Activated naive CD8-positive, alpha-beta T cell treated with anti-CD3 and anti-CD28 coated beads, Interleukin-2, amount 10 ng/mL, durations not matched to agents 7 days and 5 days (primary cell): ENCODE measurements at regions of chr5 and their contacts with region 1.

Region 1: DNA sequence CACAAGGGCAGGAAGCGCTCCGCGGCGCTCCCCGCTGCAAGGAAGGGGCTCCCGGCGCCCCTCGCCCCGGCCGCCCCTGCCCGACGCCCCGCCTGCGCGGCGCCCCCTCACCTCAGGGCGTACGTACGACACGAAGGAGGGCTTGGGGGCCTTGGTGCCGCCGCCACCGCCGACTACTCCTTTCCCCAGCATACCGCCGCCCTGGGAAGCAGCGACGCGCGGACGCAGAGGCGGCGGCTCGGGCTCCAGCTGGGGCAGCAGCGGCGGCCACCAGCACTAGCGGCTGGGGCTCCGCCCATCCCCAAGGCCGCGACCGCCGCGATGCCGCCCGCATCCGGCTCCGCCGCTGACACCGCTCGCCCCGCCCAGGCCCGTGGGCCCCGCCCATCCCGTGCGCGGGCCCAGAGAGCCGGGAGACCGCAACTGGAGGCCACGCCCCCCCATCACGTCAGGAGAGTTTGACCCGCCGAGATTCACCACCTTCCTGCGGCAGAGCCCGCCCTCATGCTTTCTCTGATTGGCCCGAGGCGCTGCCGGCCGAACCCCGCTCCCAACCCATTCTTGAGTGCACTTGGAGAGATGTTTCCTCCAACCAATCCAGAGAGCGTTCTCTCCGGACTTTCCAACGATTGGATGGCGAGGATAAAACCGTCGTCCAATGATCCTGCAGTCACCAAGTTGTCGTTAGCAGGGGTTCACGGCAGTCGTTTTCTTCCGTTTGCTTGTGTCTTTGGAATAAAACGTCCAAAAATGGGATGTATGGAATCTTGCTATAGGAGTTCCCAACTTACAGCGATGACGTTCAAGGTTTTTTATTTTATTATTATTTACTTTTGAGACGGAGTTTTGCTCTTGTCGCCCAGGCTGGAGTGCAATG is at the start of gene MTMR12:
- DNase-seq: peak; percentile 100
- ATAC-seq: peak; percentile 97
- H3K4me3 Mint-ChIP-seq: peak within 1 kb of the TSS; percentile 92
- H3K27ac Mint-ChIP-seq: peak within 1 kb of the TSS; percentile 96
- H3K4me1 Mint-ChIP-seq: peaks cover 29% of the 10 kb centered on the region
- H3K27me3 Mint-ChIP-seq: no peaks in the 10 kb centered on the region
- total RNA-seq, gene MTMR12: 30.6 to 32.2 TPM

Region 2: DNA sequence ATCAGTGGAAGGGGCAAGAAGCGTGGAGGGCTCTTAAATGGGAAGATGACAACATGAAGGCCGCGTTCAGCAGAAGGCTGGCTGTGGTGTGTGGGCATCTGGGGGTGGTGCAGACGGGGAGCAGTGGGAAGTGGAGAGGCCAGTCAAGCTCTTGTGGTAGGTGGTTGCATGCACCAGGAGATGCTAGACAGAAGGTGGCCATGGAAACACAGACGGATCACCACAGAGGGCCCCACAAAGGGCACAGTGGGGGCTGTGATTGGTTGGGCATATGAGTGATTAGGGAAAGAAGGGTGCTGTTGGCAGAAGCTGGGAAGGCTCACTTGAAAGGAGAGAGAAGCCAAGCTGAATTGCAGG is 14.8 kb before region 1 on chr5:
- POLR2A ChIA-PET with region 1: interaction called, 14 read pairs
- DNase-seq: no peak
- ATAC-seq: peak; percentile 68
- H3K4me3 Mint-ChIP-seq: no peak overlapping the region
- H3K27ac Mint-ChIP-seq: no peak overlapping the region
- H3K4me1 Mint-ChIP-seq: peaks cover 19% of the 10 kb centered on the region
- H3K27me3 Mint-ChIP-seq: no peaks in the 10 kb centered on the region

Region 3: DNA sequence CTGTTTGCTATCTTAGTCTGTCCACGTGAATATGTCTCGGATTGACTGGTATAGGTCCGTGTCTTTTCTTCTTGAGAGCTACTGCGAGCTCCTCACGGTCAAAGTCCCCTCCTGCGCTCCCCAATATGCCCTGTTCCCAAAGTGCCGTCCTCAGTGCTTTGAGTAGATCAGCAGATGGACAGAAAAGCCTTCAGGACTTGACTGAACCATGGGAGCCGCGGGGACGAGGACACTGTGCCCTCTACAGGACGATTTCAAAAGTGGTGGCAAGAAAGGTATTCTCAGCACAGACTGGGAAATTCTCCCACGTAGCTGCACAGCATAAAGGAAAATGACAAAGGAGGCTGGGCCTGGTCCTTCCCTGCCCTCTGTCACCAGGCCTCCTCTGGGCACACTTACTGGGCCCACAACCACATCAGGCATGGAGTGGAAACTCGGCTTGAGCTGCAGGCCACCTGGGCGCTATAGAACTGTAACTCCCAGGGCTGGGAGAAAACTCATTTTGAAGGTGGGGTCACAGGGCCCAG is 16.5 kb after region 1 on chr5:
- POLR2A ChIA-PET with region 1: no interaction called
- DNase-seq: peak; percentile 50
- ATAC-seq: peak; percentile 83
- H3K4me3 Mint-ChIP-seq: no peak overlapping the region
- H3K27ac Mint-ChIP-seq: no peak overlapping the region
- H3K4me1 Mint-ChIP-seq: peaks cover 2% of the 10 kb centered on the region
- H3K27me3 Mint-ChIP-seq: no peaks in the 10 kb centered on the region